A549 (cell line): ENCODE measurements at regions of chr17 and their contacts with region 1.

Region 1: DNA sequence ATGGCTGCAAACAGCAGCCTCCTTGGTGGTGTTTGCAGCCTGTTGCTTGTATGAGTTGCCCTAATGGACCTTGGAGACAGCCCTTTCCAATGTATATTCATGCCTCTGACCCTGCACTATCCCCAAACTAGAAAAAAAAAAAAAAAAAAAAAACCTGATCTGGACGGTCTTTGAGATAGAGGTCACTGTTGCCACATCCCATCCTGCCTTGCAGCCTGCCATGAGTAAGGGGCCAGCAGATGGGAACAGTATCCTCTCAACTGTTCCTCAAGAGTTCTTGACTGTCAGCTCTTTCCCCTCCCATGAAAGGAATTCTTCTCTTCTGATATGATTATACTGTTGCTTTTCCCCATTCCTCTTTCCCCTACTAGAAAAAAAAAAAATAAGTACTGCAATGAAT is 152.4 kb downstream of the SSH2 start:
- DNase-seq: no peak
- ATAC-seq: no peak
- H3K4me3 ChIP-seq: no peak overlapping the region
- H3K27ac ChIP-seq: no peak overlapping the region
- H3K4me1 ChIP-seq: no peaks in the 10 kb centered on the region; the same call in 2 of the 3 replicates
- CTCF ChIP-seq: no peak
- EP300 ChIP-seq: no peak
- POLR2A ChIP-seq: no peak
- RAD21 ChIP-seq: no peak

Region 2: DNA sequence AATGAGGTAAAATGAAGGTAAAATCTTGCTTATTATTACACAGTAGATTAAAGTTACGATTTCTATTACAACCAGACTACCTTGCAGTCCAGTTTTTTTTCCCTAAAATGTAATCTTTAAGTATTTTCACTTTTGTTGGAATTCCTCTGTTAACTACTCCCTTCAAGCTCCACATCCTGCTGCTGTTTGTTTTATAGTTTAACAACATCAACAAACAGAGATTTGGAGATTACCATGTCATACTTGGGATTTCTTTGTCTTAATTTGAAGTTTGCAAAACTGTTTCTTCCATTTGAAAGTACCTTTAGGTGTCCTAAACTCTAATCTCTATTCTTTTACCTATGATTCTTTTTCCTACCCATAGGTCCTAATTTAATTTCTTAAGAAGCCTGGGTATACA is 294.2 kb before region 1 on chr17:
- CTCF ChIA-PET with region 1: no interaction called
- POLR2A ChIA-PET with region 1: no interaction called
- DNase-seq: no peak
- ATAC-seq: no peak
- H3K4me3 ChIP-seq: no peak overlapping the region
- H3K27ac ChIP-seq: no peak overlapping the region
- H3K4me1 ChIP-seq: peaks cover 9% of the 10 kb centered on the region; the same call in 1 of the 3 replicates
- CTCF ChIP-seq: no peak
- EP300 ChIP-seq: no peak
- POLR2A ChIP-seq: no peak
- RAD21 ChIP-seq: no peak

Region 3: GRCh38 chr17:29589524-29590410 is 187.9 kb before region 1 on chr17 and contains the start of gene GIT1:
- CTCF ChIA-PET with region 1: interaction called, 14 read pairs
- POLR2A ChIA-PET with region 1: no interaction called
- DNase-seq: peak; percentile 85 to 92
- ATAC-seq: peak; percentile 21 to 40
- H3K4me3 ChIP-seq: peak within 1 kb of the TSS; percentile 82
- H3K27ac ChIP-seq: peak within 1 kb of the TSS; percentile 95 to 96
- H3K4me1 ChIP-seq: peaks cover 56% of the 10 kb centered on the region
- CTCF ChIP-seq: no peak
- EP300 ChIP-seq: no peak
- POLR2A ChIP-seq: peak; percentile 63
- RAD21 ChIP-seq: no peak
- polyA plus RNA-seq, gene GIT1: 53.0 and 56.8 TPM in 2 replicates

Region 4: DNA sequence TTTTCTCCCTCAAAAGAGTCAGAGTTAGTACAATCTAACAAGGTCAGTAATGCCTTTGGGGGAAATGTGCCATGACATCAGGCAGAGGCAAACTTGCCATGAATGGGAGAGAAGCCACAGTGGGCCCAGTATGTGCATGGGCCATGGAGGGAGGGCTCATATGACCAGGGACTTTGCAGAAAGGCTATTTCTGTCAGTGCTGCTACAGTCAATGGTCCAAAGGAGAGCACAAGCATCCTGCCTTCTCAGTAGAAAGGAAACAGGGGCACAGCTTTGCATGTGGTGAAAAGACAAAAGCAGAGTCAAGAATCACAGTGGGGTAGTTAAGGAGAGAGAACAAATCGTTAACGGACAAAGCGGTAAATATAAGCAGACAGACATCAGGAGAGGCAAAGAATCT is 143.8 kb before region 1 on chr17:
- CTCF ChIA-PET with region 1: interaction called, 222 read pairs
- POLR2A ChIA-PET with region 1: interaction called, 18 read pairs
- DNase-seq: no peak
- ATAC-seq: no peak
- H3K4me3 ChIP-seq: no peak overlapping the region
- H3K27ac ChIP-seq: no peak overlapping the region
- H3K4me1 ChIP-seq: peaks cover 5% of the 10 kb centered on the region
- CTCF ChIP-seq: no peak
- EP300 ChIP-seq: no peak
- POLR2A ChIP-seq: no peak
- RAD21 ChIP-seq: no peak

Region 5: DNA sequence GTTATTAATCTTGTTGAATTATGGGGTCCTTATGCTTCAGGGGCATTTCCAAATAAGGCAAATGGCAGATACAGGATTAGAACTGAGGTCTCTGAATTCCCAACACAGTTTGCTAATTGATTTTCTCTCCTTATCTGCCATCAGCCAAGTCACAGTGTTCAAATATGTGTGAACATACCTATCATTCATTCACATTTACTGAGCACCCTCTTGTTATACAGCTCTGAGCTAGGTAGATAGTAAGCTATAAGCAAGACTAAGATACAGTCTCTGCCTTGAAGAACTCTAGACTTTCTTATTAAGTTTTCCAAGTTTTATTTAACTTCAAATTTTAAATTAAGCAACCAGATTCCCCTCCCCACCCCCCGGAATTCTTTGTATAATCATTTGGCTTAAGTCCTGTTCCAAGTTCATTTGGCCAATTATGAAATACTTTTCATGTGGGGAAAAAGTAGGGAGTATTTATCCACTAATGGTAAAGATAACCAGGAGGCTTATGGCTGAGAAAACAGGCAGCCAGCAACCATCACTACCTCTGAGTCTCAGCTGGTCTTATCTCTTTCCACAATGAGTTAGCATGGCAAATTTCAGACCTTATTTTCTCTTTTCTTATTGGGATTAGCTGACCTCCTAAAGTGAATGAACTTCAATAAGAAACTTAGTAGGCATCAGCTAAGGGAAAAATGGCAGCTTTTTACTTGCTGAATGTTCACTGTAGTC is 123.5 kb before region 1 on chr17:
- CTCF ChIA-PET with region 1: interaction called, 21 read pairs
- POLR2A ChIA-PET with region 1: no interaction called
- DNase-seq: no peak
- ATAC-seq: no peak
- H3K4me3 ChIP-seq: no peak overlapping the region
- H3K27ac ChIP-seq: no peak overlapping the region
- H3K4me1 ChIP-seq: no peaks in the 10 kb centered on the region
- CTCF ChIP-seq: no peak
- EP300 ChIP-seq: no peak
- POLR2A ChIP-seq: no peak
- RAD21 ChIP-seq: no peak

Region 6: GRCh38 chr17:29760761-29761696 is 16.6 kb before region 1 on chr17:
- CTCF ChIA-PET with region 1: interaction called, 32 read pairs
- POLR2A ChIA-PET with region 1: interaction called, 7 read pairs
- DNase-seq: peak; percentile 79 to 88
- ATAC-seq: peak; percentile 98
- H3K4me3 ChIP-seq: peak overlapping the region; percentile 67
- H3K27ac ChIP-seq: peak overlapping the region; percentile 73 to 85
- H3K4me1 ChIP-seq: peaks cover 5% of the 10 kb centered on the region; the same call in 2 of the 3 replicates
- CTCF ChIP-seq: no peak
- EP300 ChIP-seq: no peak
- POLR2A ChIP-seq: peak; percentile 48
- RAD21 ChIP-seq: peak in 1 of 2 experiments; percentile 22; a peak in 1 of 5 replicates

Region 7: GRCh38 chr17:29796652-29797051 is 19.0 kb after region 1 on chr17:
- CTCF ChIA-PET with region 1: interaction called, 16 read pairs
- POLR2A ChIA-PET with region 1: no interaction called
- DNase-seq: no peak
- ATAC-seq: no peak
- H3K4me3 ChIP-seq: no peak overlapping the region
- H3K27ac ChIP-seq: no peak overlapping the region
- H3K4me1 ChIP-seq: no peaks in the 10 kb centered on the region
- CTCF ChIP-seq: no peak
- EP300 ChIP-seq: no peak
- POLR2A ChIP-seq: no peak
- RAD21 ChIP-seq: no peak

Region 8: DNA sequence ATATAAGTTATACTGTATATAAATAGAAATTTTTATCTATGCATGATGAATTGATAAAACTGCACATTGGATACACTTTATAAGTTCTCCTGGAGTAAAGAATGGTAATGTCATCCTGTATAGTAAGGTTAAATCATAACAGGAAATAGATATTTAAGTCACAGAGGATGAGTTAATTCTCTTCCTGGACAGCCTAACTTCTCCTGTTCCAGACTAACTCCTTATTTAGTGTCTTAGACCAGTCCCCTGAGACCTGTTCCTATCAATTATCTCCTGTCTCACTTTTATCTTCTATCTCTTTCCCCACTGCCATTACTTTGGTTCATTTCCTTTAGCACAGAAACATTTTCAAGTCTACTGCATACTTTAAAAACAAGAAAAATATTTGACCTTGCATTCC is 105.8 kb after region 1 on chr17:
- CTCF ChIA-PET with region 1: no interaction called
- POLR2A ChIA-PET with region 1: no interaction called
- DNase-seq: no peak
- ATAC-seq: no peak
- H3K4me3 ChIP-seq: no peak overlapping the region
- H3K27ac ChIP-seq: no peak overlapping the region
- H3K4me1 ChIP-seq: no peaks in the 10 kb centered on the region
- CTCF ChIP-seq: no peak
- EP300 ChIP-seq: no peak
- POLR2A ChIP-seq: no peak
- RAD21 ChIP-seq: no peak

Region 9: GRCh38 chr17:30101686-30102390 is 324.2 kb after region 1 on chr17:
- CTCF ChIA-PET with region 1: no interaction called
- POLR2A ChIA-PET with region 1: no interaction called
- DNase-seq: no peak
- ATAC-seq: no peak
- H3K4me3 ChIP-seq: no peak overlapping the region
- H3K27ac ChIP-seq: no peak overlapping the region
- H3K4me1 ChIP-seq: 0 out of 3 replicates have a peak, but pooled peaks cover 5% of the 10 kb centered on the region
- CTCF ChIP-seq: no peak
- EP300 ChIP-seq: no peak
- POLR2A ChIP-seq: no peak
- RAD21 ChIP-seq: no peak